ENCODE measurements at regions of chr9 and their contacts with region 1.

Region 1: DNA sequence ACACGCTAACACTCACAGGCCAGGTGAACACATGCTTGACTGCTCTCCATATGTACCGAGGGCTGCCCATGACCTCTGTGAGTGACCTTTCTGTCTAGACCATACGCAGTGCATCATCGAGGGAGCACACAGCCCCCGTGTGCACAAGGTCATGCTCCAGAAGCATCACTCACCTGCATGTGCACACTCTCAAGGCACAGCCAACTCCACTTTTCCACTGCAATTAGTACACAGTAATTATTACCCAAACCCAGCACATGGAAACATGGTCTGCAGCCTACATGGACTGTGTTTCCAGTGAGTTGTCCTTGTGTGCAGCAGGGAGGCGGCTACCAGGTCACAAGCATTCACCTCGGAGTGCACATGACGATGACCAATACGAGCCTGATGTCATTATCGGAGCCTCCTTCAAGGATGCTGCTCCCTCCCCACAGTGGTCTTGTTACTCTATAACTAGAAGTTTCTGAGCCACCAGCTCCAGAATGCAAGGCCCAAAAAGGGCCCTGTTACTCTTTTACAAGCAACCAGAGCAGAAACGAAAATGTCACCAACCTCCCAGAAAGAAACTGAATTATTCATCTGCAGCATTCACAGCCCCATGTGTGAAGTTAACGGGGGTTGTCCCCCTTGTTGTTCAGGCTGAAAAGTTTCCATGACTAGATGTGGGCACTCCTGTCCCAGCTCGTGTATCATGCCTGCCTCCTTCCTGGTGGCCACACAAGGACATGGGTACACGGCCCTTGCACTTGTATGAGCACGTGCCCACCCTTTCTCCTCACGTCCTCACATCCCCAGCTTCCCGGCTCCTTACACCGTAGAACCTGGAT is 31.2 kb downstream of the SEMA4D start:
- DNase-seq: peak in 1 of 9 donors; percentile 68
- ATAC-seq: peak; percentile 1
- H3K4me3 ChIP-seq: peak overlapping the region; percentile 43
- H3K4me3 Mint-ChIP-seq: peak overlapping the region; percentile 67 to 92 (median 86)
- H3K27ac ChIP-seq: peak overlapping the region; percentile 74
- H3K27ac Mint-ChIP-seq: peak overlapping the region; percentile 86 to 99 (median 97)
- H3K4me1 ChIP-seq: peaks cover 96 to 99% of the 10 kb centered on the region in 2 donors
- H3K4me1 Mint-ChIP-seq: peaks cover 79 to 99% (median 95%) of the 10 kb centered on the region in 7 donors
- H3K27me3 ChIP-seq: no peaks in the 10 kb centered on the region
- H3K27me3 Mint-ChIP-seq: no peaks in the 10 kb centered on the region

Region 2: DNA sequence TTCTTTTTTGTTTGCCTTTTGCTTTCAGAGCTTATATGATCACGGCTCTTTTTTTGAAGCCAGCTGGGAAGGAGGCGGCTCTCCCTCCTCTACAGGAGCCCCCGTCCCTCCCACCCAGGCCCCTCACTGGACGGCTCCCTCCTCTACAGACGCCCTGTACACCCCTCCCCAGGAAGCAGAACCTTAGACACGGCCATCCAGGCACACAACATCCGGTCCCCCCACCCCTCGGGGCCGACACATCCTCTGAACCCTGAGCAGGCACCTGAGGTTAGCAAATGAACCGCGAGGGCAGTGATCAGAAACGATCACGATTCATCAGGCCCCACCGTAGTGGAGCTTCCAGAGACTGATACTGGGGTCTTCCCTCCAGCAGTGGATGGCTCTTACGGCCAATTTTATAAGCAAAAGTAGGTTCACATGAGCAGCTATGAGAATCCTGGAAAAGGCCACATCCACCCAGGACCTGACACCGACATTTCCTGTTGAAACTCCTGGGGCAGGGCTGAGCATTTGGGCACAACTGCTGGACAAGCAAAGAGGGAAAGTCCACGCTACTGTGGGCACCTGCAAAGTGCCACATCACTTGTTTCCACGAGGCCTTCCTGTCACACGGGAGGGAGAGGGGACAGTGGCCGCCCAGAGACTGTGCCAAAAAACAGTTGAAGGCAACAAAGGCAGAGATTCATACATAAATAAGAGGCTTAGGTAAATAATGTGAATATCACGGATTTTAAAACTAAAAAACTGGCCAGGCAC is 47.6 kb before region 1 on chr9:
- CTCF ChIA-PET with region 1: no interaction called
- POLR2A ChIA-PET with region 1: no interaction called
- intact Hi-C with region 1: loop called in 1 of 2 experiments (anchors 1 kb)
- DNase-seq: peak in 8 of 9 donors; percentile 55 to 71 (median 68)
- ATAC-seq: peak; percentile 80
- H3K4me3 ChIP-seq: peak overlapping the region; percentile 52
- H3K4me3 Mint-ChIP-seq: peak overlapping the region; percentile 73 to 87 (median 78)
- H3K27ac ChIP-seq: peak overlapping the region; percentile 66
- H3K27ac Mint-ChIP-seq: peak overlapping the region; percentile 85 to 97 (median 94)
- H3K4me1 ChIP-seq: peaks cover 57 to 77% of the 10 kb centered on the region in 2 donors
- H3K4me1 Mint-ChIP-seq: peaks cover 65 to 96% (median 92%) of the 10 kb centered on the region in 7 donors
- H3K27me3 ChIP-seq: no peaks in the 10 kb centered on the region
- H3K27me3 Mint-ChIP-seq: no peaks in the 10 kb centered on the region

Region 3: GRCh38 chr9:89442981-89443814 is 23.5 kb before region 1 on chr9:
- CTCF ChIA-PET with region 1: no interaction called
- POLR2A ChIA-PET with region 1: interaction called, 242 read pairs
- intact Hi-C with region 1: loop called in 1 of 2 experiments (anchors 2 kb)
- DNase-seq: no peak
- ATAC-seq: peak; percentile 36
- H3K4me3 ChIP-seq: no peak overlapping the region
- H3K4me3 Mint-ChIP-seq: peak overlapping the region in 3 of 10 donors; percentile 54 to 82 (median 67)
- H3K27ac ChIP-seq: peak overlapping the region; percentile 72
- H3K27ac Mint-ChIP-seq: peak overlapping the region; percentile 76 to 99 (median 96)
- H3K4me1 ChIP-seq: peaks cover 84 to 89% of the 10 kb centered on the region in 2 donors
- H3K4me1 Mint-ChIP-seq: peaks cover 62 to 91% (median 85%) of the 10 kb centered on the region in 7 donors
- H3K27me3 ChIP-seq: no peaks in the 10 kb centered on the region
- H3K27me3 Mint-ChIP-seq: no peaks in the 10 kb centered on the region

Region 4: DNA sequence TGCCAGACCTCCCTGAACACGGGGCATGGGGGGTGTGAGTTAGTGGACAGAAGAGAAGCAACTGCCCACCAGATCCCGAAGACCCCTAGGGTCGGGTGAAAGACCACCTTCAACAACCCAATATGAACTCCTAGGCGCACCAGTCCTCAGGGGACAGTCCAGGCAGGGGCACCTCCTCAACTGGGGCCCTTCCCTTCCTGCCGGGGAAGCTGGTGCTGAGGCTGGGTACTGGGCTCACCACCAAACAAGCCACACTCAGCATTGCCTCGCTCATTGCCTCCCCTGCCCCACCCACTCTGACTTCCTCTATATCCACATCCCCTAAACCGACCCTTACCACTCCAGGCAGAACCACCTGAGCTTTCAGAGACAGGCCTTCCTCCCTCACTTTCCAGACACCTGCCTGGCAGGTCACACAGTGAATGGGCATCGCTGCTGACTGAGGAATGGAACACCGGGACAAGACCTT is 11.3 kb before region 1 on chr9:
- CTCF ChIA-PET with region 1: interaction called, 10 read pairs
- POLR2A ChIA-PET with region 1: interaction called, 242 read pairs
- intact Hi-C with region 1: loop called (anchors 1 kb)
- DNase-seq: peak in 7 of 9 donors; percentile 44 to 69 (median 64)
- ATAC-seq: peak; percentile 68
- H3K4me3 ChIP-seq: peak overlapping the region; percentile 42
- H3K4me3 Mint-ChIP-seq: peak overlapping the region; percentile 75 to 88 (median 84)
- H3K27ac ChIP-seq: peak overlapping the region; percentile 77
- H3K27ac Mint-ChIP-seq: peak overlapping the region; percentile 73 to 99 (median 98)
- H3K4me1 ChIP-seq: peaks cover 51 to 88% of the 10 kb centered on the region in 2 donors
- H3K4me1 Mint-ChIP-seq: peaks cover 70 to 100% (median 89%) of the 10 kb centered on the region in 7 donors
- H3K27me3 ChIP-seq: no peaks in the 10 kb centered on the region
- H3K27me3 Mint-ChIP-seq: no peaks in the 10 kb centered on the region

Region 5: DNA sequence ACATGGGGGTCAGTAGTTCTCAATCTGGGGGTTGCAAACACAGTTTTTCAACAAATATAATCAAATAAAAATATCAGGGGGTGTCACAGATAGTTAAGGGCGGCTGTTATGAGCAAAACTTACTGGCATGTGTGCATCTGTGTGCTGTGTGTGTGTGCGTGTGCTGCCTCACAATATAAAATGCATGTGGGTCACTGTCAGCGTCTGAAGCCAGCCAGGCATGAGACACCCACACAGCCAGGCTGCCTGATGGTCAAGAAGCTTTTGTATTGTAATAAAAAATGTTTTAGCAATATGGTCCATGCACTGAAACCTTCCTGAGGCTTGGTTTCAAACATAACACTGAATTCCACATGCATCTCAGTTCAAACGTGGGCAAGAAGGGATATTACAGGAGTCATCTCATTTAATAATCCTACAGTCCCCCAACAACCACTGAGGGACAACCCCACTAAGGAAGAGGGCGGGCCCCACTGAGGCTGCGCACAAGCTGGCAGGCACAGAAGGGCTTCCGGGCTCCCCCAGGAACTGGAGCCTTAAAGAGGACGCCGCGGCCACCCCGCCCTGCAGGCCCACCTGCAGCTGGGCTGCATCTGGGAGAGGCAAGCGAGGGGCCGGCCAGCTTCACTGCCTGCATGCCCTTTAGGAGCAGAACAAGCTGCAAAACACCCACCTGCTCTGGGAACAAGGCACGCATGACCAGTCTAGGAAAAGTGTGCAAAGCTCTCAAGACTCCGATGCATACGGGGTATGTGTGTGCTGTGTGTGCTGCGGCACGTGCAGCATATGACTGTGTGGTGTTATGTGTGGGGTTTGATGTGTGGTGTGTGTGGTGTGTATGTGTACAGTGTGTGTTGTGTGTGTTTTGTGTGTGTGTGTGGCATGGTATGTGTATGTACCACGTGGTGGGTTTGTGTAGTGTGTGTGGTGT is 17.2 kb after region 1 on chr9:
- CTCF ChIA-PET with region 1: interaction called, 4 read pairs
- POLR2A ChIA-PET with region 1: interaction called, 242 read pairs
- intact Hi-C with region 1: loop called (anchors 2 kb)
- DNase-seq: peak; percentile 41 to 76 (median 66)
- ATAC-seq: peak; percentile 84
- H3K4me3 ChIP-seq: peak overlapping the region; percentile 48
- H3K4me3 Mint-ChIP-seq: peak overlapping the region; percentile 85 to 100 (median 90)
- H3K27ac ChIP-seq: peak overlapping the region; percentile 68
- H3K27ac Mint-ChIP-seq: peak overlapping the region; percentile 88 to 99 (median 93)
- H3K4me1 ChIP-seq: peaks cover 67 to 71% of the 10 kb centered on the region in 2 donors
- H3K4me1 Mint-ChIP-seq: peaks cover 70 to 96% (median 90%) of the 10 kb centered on the region in 7 donors
- H3K27me3 ChIP-seq: no peaks in the 10 kb centered on the region
- H3K27me3 Mint-ChIP-seq: no peaks in the 10 kb centered on the region

Region 6: DNA sequence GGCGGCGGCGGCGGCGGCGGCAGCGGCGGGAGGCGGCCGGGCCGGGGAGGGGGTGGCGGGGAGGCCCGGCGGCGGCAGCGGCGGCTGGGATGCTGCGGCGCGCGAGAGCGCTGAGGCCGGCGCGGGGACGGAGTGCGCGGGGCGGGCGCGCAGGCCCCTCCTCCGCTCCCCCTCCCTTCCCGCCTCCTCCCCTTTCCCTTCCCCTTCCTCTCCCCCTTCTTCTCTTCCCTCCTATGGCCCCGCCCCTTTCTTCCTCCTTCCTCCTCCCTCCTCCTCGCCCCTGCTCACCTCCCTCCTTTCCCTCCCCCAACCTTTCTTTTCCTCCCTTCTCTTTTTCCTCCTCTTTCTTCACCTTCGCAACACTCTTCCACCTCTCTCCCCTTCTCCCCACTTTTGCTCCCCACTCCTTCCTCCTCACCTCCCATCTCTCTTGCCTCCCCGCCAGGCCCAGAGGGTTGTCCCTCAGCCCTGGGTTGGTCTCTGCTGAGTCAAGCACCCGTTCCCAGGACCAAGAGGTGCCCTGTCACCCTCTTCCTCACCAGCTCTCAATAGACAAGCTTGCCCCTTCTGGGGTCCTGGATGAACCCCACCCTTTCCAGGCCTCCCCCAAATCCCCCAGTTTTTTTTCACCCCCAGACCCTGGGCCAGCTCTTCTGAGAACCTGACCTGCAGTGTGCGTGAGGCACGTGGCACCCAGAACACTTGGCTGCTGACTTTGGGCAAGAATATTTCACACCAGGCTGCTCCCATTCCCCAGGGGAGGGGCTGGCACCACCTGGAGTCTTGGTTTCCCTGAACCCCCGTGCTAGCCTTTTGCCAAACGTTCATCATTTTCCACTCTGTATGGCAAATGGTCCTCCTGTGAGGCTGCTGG is 31.6 kb after region 1 on chr9 and contains the start of gene SEMA4D:
- CTCF ChIA-PET with region 1: interaction called, 3 read pairs
- POLR2A ChIA-PET with region 1: interaction called, 11 read pairs
- intact Hi-C with region 1: loop called (anchors 1 kb)
- DNase-seq: peak in 2 of 9 donors; percentile 48 to 71
- ATAC-seq: peak; percentile 22
- H3K4me3 ChIP-seq: peak within 1 kb of the TSS; percentile 67
- H3K4me3 Mint-ChIP-seq: peak within 1 kb of the TSS; percentile 85 to 100 (median 98)
- H3K27ac ChIP-seq: peak within 1 kb of the TSS; percentile 76
- H3K27ac Mint-ChIP-seq: peak within 1 kb of the TSS; percentile 86 to 99 (median 94)
- H3K4me1 ChIP-seq: peaks cover 72 to 75% of the 10 kb centered on the region in 2 donors
- H3K4me1 Mint-ChIP-seq: peaks cover 72 to 90% (median 77%) of the 10 kb centered on the region in 7 donors
- H3K27me3 ChIP-seq: no peaks in the 10 kb centered on the region
- H3K27me3 Mint-ChIP-seq: no peaks in the 10 kb centered on the region
- total RNA-seq, gene SEMA4D: 389 to 465 (median 460) TPM

Region 7: GRCh38 chr9:89522261-89522958 is 55.7 kb after region 1 on chr9:
- CTCF ChIA-PET with region 1: no interaction called
- POLR2A ChIA-PET with region 1: interaction called, 13 read pairs
- intact Hi-C with region 1: loop called (anchors 1 kb)
- DNase-seq: peak; percentile 33 to 91 (median 88)
- ATAC-seq: peak; percentile 91
- H3K4me3 ChIP-seq: peak overlapping the region; percentile 40
- H3K4me3 Mint-ChIP-seq: peak overlapping the region; percentile 18 to 90 (median 82)
- H3K27ac ChIP-seq: peak overlapping the region; percentile 72
- H3K27ac Mint-ChIP-seq: peak overlapping the region; percentile 94 to 100 (median 97)
- H3K4me1 ChIP-seq: peaks cover 94 to 95% of the 10 kb centered on the region in 2 donors
- H3K4me1 Mint-ChIP-seq: peaks cover 81 to 97% (median 95%) of the 10 kb centered on the region in 7 donors
- H3K27me3 ChIP-seq: no peaks in the 10 kb centered on the region
- H3K27me3 Mint-ChIP-seq: no peaks in the 10 kb centered on the region